B cell (primary cell): ENCODE measurements at regions of chr2 and their contacts with region 1.

Region 1: DNA sequence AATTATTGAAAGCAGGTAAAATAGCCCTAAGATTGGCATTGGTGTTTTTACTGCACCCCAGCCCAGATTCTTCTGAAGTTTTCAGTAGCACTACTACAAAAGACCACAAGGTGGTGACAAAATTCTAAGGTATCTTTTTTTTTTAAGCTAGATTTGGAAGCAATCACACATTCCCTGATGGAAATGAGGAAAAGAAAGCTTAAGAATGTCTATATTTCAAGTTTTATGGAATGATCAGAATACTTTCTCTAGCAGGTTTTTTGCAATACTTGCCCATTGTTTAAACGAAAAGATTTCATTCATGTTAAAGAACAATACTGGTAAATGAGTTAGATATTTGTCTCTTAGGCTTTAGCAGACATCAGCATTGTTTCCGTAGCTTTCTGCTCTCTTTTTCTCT is 32.1 kb upstream of the ZNF638 start:
- DNase-seq: peak; percentile 57
- ATAC-seq: no peak
- H3K4me3 ChIP-seq: no peak overlapping the region
- H3K4me3 Mint-ChIP-seq: no peak overlapping the region
- H3K27ac ChIP-seq: no peak overlapping the region
- H3K27ac Mint-ChIP-seq: no peak overlapping the region
- H3K4me1 ChIP-seq: no peaks in the 10 kb centered on the region
- H3K4me1 Mint-ChIP-seq: no peaks in the 10 kb centered on the region
- H3K27me3 ChIP-seq: no peaks in the 10 kb centered on the region
- H3K27me3 Mint-ChIP-seq: no peaks in the 10 kb centered on the region
- CTCF ChIP-seq: peak; percentile 94

Region 2: GRCh38 chr2:71136174-71136573 is 163.3 kb before region 1 on chr2:
- CTCF ChIA-PET with region 1: interaction called, 10 read pairs
- POLR2A ChIA-PET with region 1: no interaction called
- intact Hi-C with region 1: no loop called
- DNase-seq: no peak
- ATAC-seq: no peak
- H3K4me3 ChIP-seq: no peak overlapping the region
- H3K4me3 Mint-ChIP-seq: no peak overlapping the region
- H3K27ac ChIP-seq: no peak overlapping the region
- H3K27ac Mint-ChIP-seq: no peak overlapping the region
- H3K4me1 ChIP-seq: peaks cover 10 to 12% of the 10 kb centered on the region in 2 donors
- H3K4me1 Mint-ChIP-seq: no peaks in the 10 kb centered on the region
- H3K27me3 ChIP-seq: no peaks in the 10 kb centered on the region
- H3K27me3 Mint-ChIP-seq: no peaks in the 10 kb centered on the region
- CTCF ChIP-seq: no peak

Region 3: DNA sequence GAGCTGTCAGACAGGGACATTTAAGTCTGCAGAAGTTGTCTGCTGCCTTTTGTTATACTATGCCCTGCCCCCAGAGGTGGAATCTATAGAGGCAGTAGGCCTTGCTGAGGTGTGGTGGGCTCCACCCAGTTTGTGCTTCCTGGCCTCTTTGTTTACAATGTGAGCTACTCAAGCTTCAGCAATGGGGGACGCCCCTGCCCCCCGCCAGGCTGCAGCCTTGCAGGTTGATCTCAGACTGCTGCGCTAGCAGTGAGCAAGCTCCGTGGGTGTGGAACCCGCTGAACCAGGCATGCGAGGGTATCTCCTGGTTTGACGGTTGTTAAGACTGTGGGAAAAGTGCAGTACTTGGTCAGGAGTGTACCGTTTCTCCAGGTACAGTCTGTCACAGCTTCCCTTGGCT is 48.6 kb before region 1 on chr2:
- CTCF ChIA-PET with region 1: no interaction called
- POLR2A ChIA-PET with region 1: no interaction called
- intact Hi-C with region 1: no loop called
- DNase-seq: no peak
- ATAC-seq: no peak
- H3K4me3 ChIP-seq: no peak overlapping the region
- H3K4me3 Mint-ChIP-seq: no peak overlapping the region
- H3K27ac ChIP-seq: no peak overlapping the region
- H3K27ac Mint-ChIP-seq: no peak overlapping the region
- H3K4me1 ChIP-seq: peaks cover 5 to 7% of the 10 kb centered on the region in 2 donors
- H3K4me1 Mint-ChIP-seq: peaks cover 8% of the 10 kb centered on the region
- H3K27me3 ChIP-seq: peaks cover 0 to 10% (median 1%) of the 10 kb centered on the region in 4 experiments
- H3K27me3 Mint-ChIP-seq: peaks cover 43% of the 10 kb centered on the region
- CTCF ChIP-seq: no peak

Region 4: DNA sequence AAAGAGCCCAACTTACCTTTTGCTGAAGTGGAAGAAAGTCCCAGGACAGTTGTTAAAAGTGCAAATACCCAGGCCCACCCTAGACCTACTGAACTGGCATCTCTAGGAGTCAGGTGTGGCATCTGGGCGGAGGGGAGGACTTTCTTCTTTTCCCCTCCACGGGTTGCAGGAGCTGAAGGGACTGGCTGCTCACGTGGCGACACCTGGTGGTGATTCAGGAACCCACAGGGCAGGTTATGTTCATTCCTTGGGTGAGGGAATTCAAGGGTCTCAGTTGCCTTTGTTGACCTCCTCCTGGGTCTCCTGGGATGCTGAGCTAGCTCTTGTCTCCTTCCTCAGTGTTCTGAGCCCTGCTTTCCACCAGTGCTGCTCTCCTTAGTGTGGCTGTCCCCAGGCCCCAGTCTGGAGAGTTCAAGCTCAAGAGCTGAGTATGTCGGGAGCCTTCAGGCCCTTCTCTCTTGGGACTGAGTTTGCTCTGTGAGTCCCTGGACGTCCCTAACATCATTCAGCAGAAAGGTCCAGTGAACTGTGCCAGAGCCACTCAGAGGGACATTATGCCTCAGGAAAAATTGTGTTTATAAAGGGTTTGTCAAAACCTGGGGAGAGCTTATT is 210.8 kb after region 1 on chr2:
- CTCF ChIA-PET with region 1: interaction called, 350 read pairs
- POLR2A ChIA-PET with region 1: no interaction called
- intact Hi-C with region 1: no loop called
- DNase-seq: peak; percentile 73
- ATAC-seq: peak; percentile 54
- H3K4me3 ChIP-seq: no peak overlapping the region
- H3K4me3 Mint-ChIP-seq: no peak overlapping the region
- H3K27ac ChIP-seq: no peak overlapping the region
- H3K27ac Mint-ChIP-seq: no peak overlapping the region
- H3K4me1 ChIP-seq: no peaks in the 10 kb centered on the region
- H3K4me1 Mint-ChIP-seq: peaks cover 2% of the 10 kb centered on the region
- H3K27me3 ChIP-seq: no peaks in the 10 kb centered on the region
- H3K27me3 Mint-ChIP-seq: peaks cover 11% of the 10 kb centered on the region
- CTCF ChIP-seq: peak; percentile 86

Region 5: GRCh38 chr2:72035518-72036172 is 736.1 kb after region 1 on chr2:
- CTCF ChIA-PET with region 1: no interaction called
- POLR2A ChIA-PET with region 1: no interaction called
- intact Hi-C with region 1: no loop called
- DNase-seq: no peak
- ATAC-seq: no peak
- H3K4me3 ChIP-seq: no peak overlapping the region
- H3K4me3 Mint-ChIP-seq: no peak overlapping the region
- H3K27ac ChIP-seq: no peak overlapping the region
- H3K27ac Mint-ChIP-seq: no peak overlapping the region
- H3K4me1 ChIP-seq: no peaks in the 10 kb centered on the region
- H3K4me1 Mint-ChIP-seq: no peaks in the 10 kb centered on the region
- H3K27me3 ChIP-seq: peaks cover 0 to 3% (median 0%) of the 10 kb centered on the region in 4 experiments
- H3K27me3 Mint-ChIP-seq: peaks cover 3% of the 10 kb centered on the region
- CTCF ChIP-seq: no peak